Activated T-helper 1 cell treated with anti-CD3 and anti-CD28 coated beads, Interleukin-12 subunit alpha, Interleukin-12 subunit beta, Interleukin-2, Interleukin-4 antibody, amounts not matched to agents 30 ng/mL and 10 ng/mL and 1 ng/mL, durations not matched to agents 14 hours and 24 hours and 36 hours (primary cell): ENCODE measurements at regions of chr2 and their contacts with region 1.

Region 1: GRCh38 chr2:176876493-176877103 is 336.0 kb upstream of the HNRNPA3 start:
- DNase-seq: no peak
- H3K4me3 Mint-ChIP-seq: no peak overlapping the region
- H3K27ac Mint-ChIP-seq: no peak overlapping the region
- H3K4me1 Mint-ChIP-seq: peaks cover 20% of the 10 kb centered on the region
- H3K27me3 Mint-ChIP-seq: peaks cover 7% of the 10 kb centered on the region

Region 2: GRCh38 chr2:176852667-176853066 is 23.9 kb before region 1 on chr2:
- intact Hi-C with region 1: loop called (anchors 2 kb)
- DNase-seq: peak; percentile 56
- H3K4me3 Mint-ChIP-seq: no peak overlapping the region
- H3K27ac Mint-ChIP-seq: peak overlapping the region; percentile 9
- H3K4me1 Mint-ChIP-seq: peaks cover 56% of the 10 kb centered on the region
- H3K27me3 Mint-ChIP-seq: peaks cover 4% of the 10 kb centered on the region

Region 3: GRCh38 chr2:177207101-177207500 is 330.5 kb after region 1 on chr2:
- intact Hi-C with region 1: no loop called
- DNase-seq: no peak
- H3K4me3 Mint-ChIP-seq: no peak overlapping the region
- H3K27ac Mint-ChIP-seq: peak overlapping the region; percentile 59
- H3K4me1 Mint-ChIP-seq: peaks cover 25% of the 10 kb centered on the region
- H3K27me3 Mint-ChIP-seq: peaks cover 4% of the 10 kb centered on the region